Naive thymus-derived CD4-positive, alpha-beta T cell (primary cell): ENCODE measurements at regions of chr6 and their contacts with region 1.

Region 1: GRCh38 chr6:116279260-116280063 is at the start of gene TSPYL1:
- DNase-seq: peak; percentile 85 to 98 (median 96)
- ATAC-seq: peak; percentile 92
- H3K4me3 ChIP-seq: peak within 1 kb of the TSS; percentile 86
- H3K4me3 Mint-ChIP-seq: peak within 1 kb of the TSS; percentile 96 to 100 (median 98)
- H3K27ac ChIP-seq: peak within 1 kb of the TSS; percentile 99
- H3K27ac Mint-ChIP-seq: peak within 1 kb of the TSS; percentile 98 to 100 (median 100)
- H3K4me1 ChIP-seq: peaks cover 39 to 43% of the 10 kb centered on the region in 2 donors
- H3K4me1 Mint-ChIP-seq: peaks cover 37 to 73% (median 54%) of the 10 kb centered on the region in 7 donors
- H3K27me3 ChIP-seq: no peaks in the 10 kb centered on the region
- H3K27me3 Mint-ChIP-seq: peaks cover 0 to 6% (median 0%) of the 10 kb centered on the region in 5 donors
- total RNA-seq, gene TSPYL1: 42.8 to 226 (median 104) TPM

Region 2: GRCh38 chr6:116217069-116217468 is 62.4 kb before region 1 on chr6:
- CTCF ChIA-PET with region 1: no interaction called
- POLR2A ChIA-PET with region 1: no interaction called
- intact Hi-C with region 1: loop called (anchors 2 to 5 kb)
- DNase-seq: peak in 6 of 9 donors; percentile 10 to 55 (median 44)
- ATAC-seq: peak; percentile 86
- H3K4me3 ChIP-seq: no peak overlapping the region
- H3K4me3 Mint-ChIP-seq: no peak overlapping the region
- H3K27ac ChIP-seq: no peak overlapping the region
- H3K27ac Mint-ChIP-seq: peak overlapping the region in 5 of 9 donors; percentile 7 to 76 (median 44)
- H3K4me1 ChIP-seq: no peaks in the 10 kb centered on the region
- H3K4me1 Mint-ChIP-seq: peaks cover 0 to 12% (median 6%) of the 10 kb centered on the region in 7 donors
- H3K27me3 ChIP-seq: no peaks in the 10 kb centered on the region
- H3K27me3 Mint-ChIP-seq: no peaks in the 10 kb centered on the region

Region 3: DNA sequence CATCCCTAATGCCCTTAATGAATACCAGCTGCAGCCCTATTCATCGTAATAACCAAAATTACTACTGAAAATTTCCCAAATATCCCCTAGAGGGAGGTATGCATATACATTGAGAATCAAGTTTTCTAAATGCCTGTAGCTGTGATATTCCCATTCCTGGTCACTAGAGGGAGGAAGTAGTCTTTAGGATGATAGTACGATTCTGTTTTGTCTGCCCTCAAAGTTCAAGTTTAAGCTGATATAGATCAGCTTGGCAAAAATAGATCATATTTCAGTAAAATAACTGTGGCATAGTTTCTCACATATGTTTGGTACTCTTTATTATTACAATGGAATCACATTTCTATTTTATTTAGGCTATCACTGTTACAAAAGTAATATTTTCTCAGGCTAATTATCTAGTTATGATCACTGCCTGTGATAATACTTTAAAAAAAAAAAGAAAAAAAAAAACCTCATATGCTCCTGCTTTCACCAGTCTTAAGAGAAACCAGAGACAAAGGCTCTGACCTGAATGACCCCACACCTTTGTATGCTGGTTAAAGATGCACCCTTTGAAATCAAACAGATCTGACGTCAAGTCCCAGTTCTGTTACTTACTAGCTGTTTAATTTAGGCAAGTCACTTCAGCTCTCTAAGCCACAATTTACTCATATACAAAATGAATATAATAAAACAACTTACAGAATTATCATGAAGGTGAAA is 10.7 kb before region 1 on chr6:
- CTCF ChIA-PET with region 1: interaction called, 6 read pairs
- POLR2A ChIA-PET with region 1: interaction called, 41 read pairs
- intact Hi-C with region 1: loop called (anchors 1 kb)
- DNase-seq: peak in 7 of 9 donors; percentile 21 to 54 (median 49)
- ATAC-seq: peak; percentile 93
- H3K4me3 ChIP-seq: no peak overlapping the region
- H3K4me3 Mint-ChIP-seq: no peak overlapping the region
- H3K27ac ChIP-seq: peak overlapping the region; percentile 6
- H3K27ac Mint-ChIP-seq: peak overlapping the region in 7 of 9 donors; percentile 1 to 60 (median 23)
- H3K4me1 ChIP-seq: no peaks in the 10 kb centered on the region
- H3K4me1 Mint-ChIP-seq: peaks cover 8 to 56% (median 49%) of the 10 kb centered on the region in 7 donors
- H3K27me3 ChIP-seq: no peaks in the 10 kb centered on the region
- H3K27me3 Mint-ChIP-seq: no peaks in the 10 kb centered on the region

Region 4: DNA sequence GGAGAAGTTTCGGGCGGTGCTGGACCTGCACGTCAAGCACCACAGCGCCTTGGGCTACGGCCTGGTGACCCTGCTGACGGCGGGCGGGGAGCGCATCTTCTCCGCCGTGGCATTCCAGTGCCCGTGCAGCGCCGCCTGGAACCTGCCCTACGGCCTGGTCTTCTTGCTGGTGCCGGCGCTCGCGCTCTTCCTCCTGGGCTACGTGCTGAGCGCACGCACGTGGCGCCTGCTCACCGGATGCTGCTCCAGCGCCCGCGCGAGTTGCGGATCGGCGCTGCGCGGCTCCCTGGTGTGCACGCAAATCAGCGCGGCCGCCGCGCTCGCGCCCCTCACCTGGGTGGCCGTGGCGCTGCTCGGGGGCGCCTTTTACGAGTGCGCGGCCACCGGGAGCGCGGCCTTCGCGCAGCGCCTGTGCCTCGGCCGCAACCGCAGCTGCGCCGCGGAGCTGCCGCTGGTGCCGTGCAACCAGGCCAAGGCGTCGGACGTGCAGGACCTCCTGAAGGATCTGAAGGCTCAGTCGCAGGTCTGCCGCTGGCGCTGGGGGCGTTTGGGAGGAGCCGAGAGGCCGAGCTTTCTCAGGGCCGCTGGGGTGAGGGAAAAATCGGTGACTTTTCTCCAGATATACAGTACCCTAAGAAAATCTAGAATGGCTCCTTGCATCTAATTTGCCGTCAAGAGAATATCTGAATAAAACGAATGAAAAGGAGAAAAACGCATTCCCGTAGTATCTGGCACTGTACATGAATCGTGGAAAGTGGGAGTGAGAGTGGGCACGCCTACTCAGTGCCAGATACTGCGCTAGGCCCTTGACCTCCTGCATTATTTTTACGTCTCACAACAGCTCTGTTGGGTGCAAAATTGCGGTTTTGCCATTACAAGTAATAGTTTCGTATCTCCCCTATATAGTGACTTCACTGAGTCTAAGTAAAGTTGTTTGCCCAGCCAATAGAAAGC is 182.7 kb after region 1 on chr6:
- CTCF ChIA-PET with region 1: no interaction called
- POLR2A ChIA-PET with region 1: interaction called, 3 read pairs
- intact Hi-C with region 1: loop called (anchors 2 to 5 kb)
- DNase-seq: peak; percentile 25 to 71 (median 62)
- ATAC-seq: peak; percentile 89
- H3K4me3 ChIP-seq: peak overlapping the region; percentile 58
- H3K4me3 Mint-ChIP-seq: peak overlapping the region; percentile 76 to 87 (median 80)
- H3K27ac ChIP-seq: no peak overlapping the region
- H3K27ac Mint-ChIP-seq: peak overlapping the region in 7 of 9 donors; percentile 33 to 92 (median 76)
- H3K4me1 ChIP-seq: peaks cover 7 to 16% of the 10 kb centered on the region in 2 donors
- H3K4me1 Mint-ChIP-seq: peaks cover 17 to 88% (median 26%) of the 10 kb centered on the region in 7 donors
- H3K27me3 ChIP-seq: no peaks in the 10 kb centered on the region
- H3K27me3 Mint-ChIP-seq: peaks cover 0 to 39% (median 4%) of the 10 kb centered on the region in 5 donors

Region 5: GRCh38 chr6:116667623-116668022 is 388.2 kb after region 1 on chr6:
- CTCF ChIA-PET with region 1: interaction called, 3 read pairs
- POLR2A ChIA-PET with region 1: interaction called, 4 read pairs
- intact Hi-C with region 1: loop called (anchors 1 to 5 kb)
- DNase-seq: no peak
- ATAC-seq: no peak
- H3K4me3 ChIP-seq: peak overlapping the region; percentile 92
- H3K4me3 Mint-ChIP-seq: peak overlapping the region; percentile 90 to 100 (median 98)
- H3K27ac ChIP-seq: peak overlapping the region; percentile 91
- H3K27ac Mint-ChIP-seq: peak overlapping the region; percentile 44 to 100 (median 98)
- H3K4me1 ChIP-seq: peaks cover 17 to 24% of the 10 kb centered on the region in 2 donors
- H3K4me1 Mint-ChIP-seq: peaks cover 29 to 55% (median 45%) of the 10 kb centered on the region in 7 donors
- H3K27me3 ChIP-seq: no peaks in the 10 kb centered on the region
- H3K27me3 Mint-ChIP-seq: peaks cover 0 to 15% (median 0%) of the 10 kb centered on the region in 5 donors